GM12878 (cell line): ENCODE measurements at regions of chr1 and their contacts with region 1.

Region 1: DNA sequence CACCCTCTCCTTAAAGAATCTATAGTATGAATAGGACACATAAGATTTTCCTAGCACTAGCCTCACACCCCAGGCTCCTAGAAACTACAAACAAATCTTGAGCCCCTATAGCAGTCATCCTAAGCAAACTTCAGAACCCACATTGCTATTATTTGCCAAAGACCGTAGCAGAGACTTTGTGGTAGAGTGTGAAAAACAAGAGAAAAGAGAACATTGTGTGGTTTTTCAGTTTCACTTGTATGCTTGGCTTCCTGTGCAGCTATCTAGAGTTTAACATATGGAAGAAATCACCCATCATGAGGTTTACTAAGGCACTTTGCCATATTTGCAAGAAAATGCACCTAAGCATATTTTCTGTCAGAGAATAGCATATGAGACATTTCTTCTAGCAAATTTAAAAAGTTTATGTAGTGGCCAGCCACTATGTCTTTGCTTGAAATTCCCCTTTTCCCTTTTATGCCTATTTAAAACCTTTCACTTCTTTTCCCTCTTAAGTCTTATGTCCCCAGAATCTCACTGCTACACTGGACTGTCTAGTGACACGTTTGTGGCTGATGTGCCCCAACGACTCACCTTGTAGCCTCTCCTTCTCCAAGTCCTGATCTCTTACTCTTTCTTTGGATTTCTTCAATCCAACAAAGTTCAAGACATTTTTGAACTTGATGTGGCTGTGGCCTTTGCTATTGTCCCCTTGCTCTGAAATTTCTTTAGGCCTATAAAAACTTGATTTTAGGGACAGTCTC is 25.6 kb downstream of the CCDC190 start:
- DNase-seq: peak; percentile 61
- ATAC-seq: peak; percentile 91
- H3K4me3 ChIP-seq: no peak overlapping the region
- H3K27ac ChIP-seq: no peak overlapping the region; the same call in 1 of the 2 replicates
- H3K4me1 ChIP-seq: peaks cover 20% of the 10 kb centered on the region
- H3K27me3 ChIP-seq: no peaks in the 10 kb centered on the region
- CTCF ChIP-seq: no peak
- EP300 ChIP-seq: peak in 1 of 2 experiments; percentile 38; a peak in 1 of 4 replicates
- POLR2A ChIP-seq: no peak
- RAD21 ChIP-seq: no peak

Region 2: DNA sequence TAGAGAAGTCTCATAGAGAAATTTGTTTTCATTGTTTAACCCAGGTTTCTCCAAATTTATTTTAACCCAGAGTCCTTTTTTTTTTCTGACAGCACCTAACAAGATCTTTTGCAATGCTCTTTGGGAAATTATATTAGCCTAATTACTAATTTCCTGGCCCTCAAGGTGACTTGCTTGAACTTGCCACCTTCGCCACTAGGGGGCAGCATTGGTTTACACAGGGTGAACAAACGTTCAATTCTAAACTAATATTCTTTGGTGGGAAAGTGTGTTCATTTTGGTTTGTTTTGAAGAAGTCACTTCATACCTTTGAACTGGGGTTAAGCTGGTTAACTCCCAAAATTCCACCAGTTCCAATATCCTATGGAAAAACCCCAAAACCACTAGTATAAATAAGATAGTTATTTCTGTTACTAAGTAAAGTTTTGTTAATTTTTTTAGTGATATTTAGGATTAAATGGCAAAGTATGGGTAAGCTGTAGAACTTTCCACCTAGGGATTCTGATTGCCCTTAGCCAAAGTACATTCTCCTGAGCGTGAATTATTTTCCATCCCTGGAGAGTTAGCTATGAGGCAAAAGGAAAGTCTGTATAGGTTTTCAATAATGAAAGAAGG is 12.6 kb after region 1 on chr1:
- CTCF ChIA-PET with region 1: interaction called, 23 read pairs
- POLR2A ChIA-PET with region 1: no interaction called
- RAD21 ChIA-PET with region 1: no interaction called
- SMC1A ChIA-PET with region 1: interaction called, 11 read pairs
- in situ Hi-C with region 1: no loop called
- intact Hi-C with region 1: no loop called
- DNase-seq: no peak
- ATAC-seq: peak; percentile 79
- H3K4me3 ChIP-seq: no peak overlapping the region
- H3K27ac ChIP-seq: no peak overlapping the region
- H3K4me1 ChIP-seq: no peaks in the 10 kb centered on the region
- H3K27me3 ChIP-seq: no peaks in the 10 kb centered on the region; a peak in 1 of 4 replicates
- CTCF ChIP-seq: peak; percentile 81 to 83 (median 82)
- EP300 ChIP-seq: no peak
- POLR2A ChIP-seq: no peak
- RAD21 ChIP-seq: peak; percentile 83

Region 3: GRCh38 chr1:163035446-163036249 is 200.3 kb after region 1 on chr1:
- CTCF ChIA-PET with region 1: no interaction called
- POLR2A ChIA-PET with region 1: no interaction called
- RAD21 ChIA-PET with region 1: no interaction called
- SMC1A ChIA-PET with region 1: no interaction called
- in situ Hi-C with region 1: no loop called
- intact Hi-C with region 1: no loop called
- DNase-seq: no peak
- ATAC-seq: no peak
- H3K4me3 ChIP-seq: no peak overlapping the region
- H3K27ac ChIP-seq: no peak overlapping the region
- H3K4me1 ChIP-seq: no peaks in the 10 kb centered on the region
- H3K27me3 ChIP-seq: no peaks in the 10 kb centered on the region
- CTCF ChIP-seq: no peak
- EP300 ChIP-seq: no peak
- POLR2A ChIP-seq: no peak
- RAD21 ChIP-seq: no peak